ENCODE measurements at regions of chr6 and their contacts with region 1.

Region 1: DNA sequence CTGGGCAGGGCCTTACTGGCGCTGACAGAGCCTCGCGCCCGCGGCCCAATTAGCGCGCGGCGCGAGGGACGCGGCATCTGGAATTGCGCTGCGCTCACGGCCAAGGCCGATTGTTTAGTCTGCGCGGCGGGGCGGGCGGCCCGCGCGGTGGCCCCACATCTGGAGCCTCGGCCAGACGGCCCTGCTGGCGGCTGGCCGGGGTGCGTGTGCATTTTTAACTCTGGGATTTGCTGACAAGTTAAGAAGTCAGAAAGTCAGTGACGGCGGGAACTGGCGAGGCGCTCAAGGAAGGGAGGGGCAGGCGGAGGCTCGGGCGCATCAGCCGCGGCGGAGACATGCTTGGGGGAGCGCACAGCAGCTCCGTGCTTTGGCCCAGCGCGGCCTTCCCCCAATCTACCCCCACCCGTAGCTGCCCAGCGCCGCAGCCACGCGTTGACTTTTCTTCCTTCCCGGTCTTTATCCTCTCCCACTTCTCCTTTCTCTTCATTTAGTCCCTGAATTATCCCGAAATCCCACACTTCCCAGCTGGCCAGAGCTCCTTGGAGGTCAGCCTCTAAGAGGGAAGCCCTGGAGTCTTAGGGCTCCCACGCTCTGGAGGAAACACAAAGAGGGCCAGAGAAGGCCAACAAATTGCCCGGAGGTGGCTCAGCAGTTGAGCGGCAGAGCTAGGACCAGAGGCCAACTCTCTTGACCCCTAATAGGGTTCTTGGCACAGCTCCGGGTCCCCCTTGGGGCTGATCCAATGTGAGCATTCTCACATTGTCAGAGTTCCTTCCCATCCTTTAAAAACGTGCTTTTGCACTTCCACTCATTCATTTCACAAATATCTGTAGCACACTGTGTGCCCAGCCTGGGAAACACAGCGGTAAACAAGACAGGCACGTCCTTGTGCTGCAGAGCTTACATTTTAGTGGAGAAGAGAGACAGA is 40.8 kb upstream of the FOXP4 start:
- DNase-seq: peak; percentile 85
- ATAC-seq: peak; percentile 92
- H3K4me3 ChIP-seq: peak overlapping the region in 4 of 5 experiments; percentile 32 to 77 (median 57)
- H3K4me3 Mint-ChIP-seq: peak overlapping the region; percentile 92
- H3K27ac ChIP-seq: peak overlapping the region; percentile 55 to 69
- H3K27ac Mint-ChIP-seq: peak overlapping the region; percentile 91
- H3K4me1 ChIP-seq: peaks cover 29 to 34% of the 10 kb centered on the region in 2 donors
- H3K4me1 Mint-ChIP-seq: peaks cover 37% of the 10 kb centered on the region
- H3K27me3 ChIP-seq: peaks cover 0 to 15% (median 3%) of the 10 kb centered on the region in 4 experiments
- H3K27me3 Mint-ChIP-seq: peaks cover 14% of the 10 kb centered on the region
- CTCF ChIP-seq: no peak

Region 2: GRCh38 chr6:41531591-41532582 is 26.5 kb after region 1 on chr6:
- CTCF ChIA-PET with region 1: interaction called, 9 read pairs
- POLR2A ChIA-PET with region 1: interaction called, 4 read pairs
- intact Hi-C with region 1: loop called (anchors 1 kb)
- DNase-seq: peak; percentile 86
- ATAC-seq: peak; percentile 82
- H3K4me3 ChIP-seq: peak overlapping the region in 4 of 5 experiments; percentile 29 to 48 (median 40)
- H3K4me3 Mint-ChIP-seq: peak overlapping the region; percentile 81
- H3K27ac ChIP-seq: peak overlapping the region; percentile 80 to 87
- H3K27ac Mint-ChIP-seq: peak overlapping the region; percentile 94
- H3K4me1 ChIP-seq: peaks cover 40 to 56% of the 10 kb centered on the region in 2 donors
- H3K4me1 Mint-ChIP-seq: peaks cover 68% of the 10 kb centered on the region
- H3K27me3 ChIP-seq: peaks cover 0 to 2% (median 0%) of the 10 kb centered on the region in 4 experiments
- H3K27me3 Mint-ChIP-seq: peaks cover 6% of the 10 kb centered on the region
- CTCF ChIP-seq: no peak

Region 3: GRCh38 chr6:41560431-41561192 is 55.2 kb after region 1 on chr6:
- CTCF ChIA-PET with region 1: no interaction called
- POLR2A ChIA-PET with region 1: no interaction called
- intact Hi-C with region 1: loop called (anchors 5 kb)
- DNase-seq: peak; percentile 91
- ATAC-seq: peak; percentile 86
- H3K4me3 ChIP-seq: peak overlapping the region; percentile 53 to 86 (median 75)
- H3K4me3 Mint-ChIP-seq: peak overlapping the region; percentile 91
- H3K27ac ChIP-seq: peak overlapping the region; percentile 58 to 92
- H3K27ac Mint-ChIP-seq: peak overlapping the region; percentile 84
- H3K4me1 ChIP-seq: peaks cover 16 to 24% of the 10 kb centered on the region in 2 donors
- H3K4me1 Mint-ChIP-seq: peaks cover 39% of the 10 kb centered on the region
- H3K27me3 ChIP-seq: no peaks in the 10 kb centered on the region
- H3K27me3 Mint-ChIP-seq: no peaks in the 10 kb centered on the region
- CTCF ChIP-seq: no peak

Region 4: DNA sequence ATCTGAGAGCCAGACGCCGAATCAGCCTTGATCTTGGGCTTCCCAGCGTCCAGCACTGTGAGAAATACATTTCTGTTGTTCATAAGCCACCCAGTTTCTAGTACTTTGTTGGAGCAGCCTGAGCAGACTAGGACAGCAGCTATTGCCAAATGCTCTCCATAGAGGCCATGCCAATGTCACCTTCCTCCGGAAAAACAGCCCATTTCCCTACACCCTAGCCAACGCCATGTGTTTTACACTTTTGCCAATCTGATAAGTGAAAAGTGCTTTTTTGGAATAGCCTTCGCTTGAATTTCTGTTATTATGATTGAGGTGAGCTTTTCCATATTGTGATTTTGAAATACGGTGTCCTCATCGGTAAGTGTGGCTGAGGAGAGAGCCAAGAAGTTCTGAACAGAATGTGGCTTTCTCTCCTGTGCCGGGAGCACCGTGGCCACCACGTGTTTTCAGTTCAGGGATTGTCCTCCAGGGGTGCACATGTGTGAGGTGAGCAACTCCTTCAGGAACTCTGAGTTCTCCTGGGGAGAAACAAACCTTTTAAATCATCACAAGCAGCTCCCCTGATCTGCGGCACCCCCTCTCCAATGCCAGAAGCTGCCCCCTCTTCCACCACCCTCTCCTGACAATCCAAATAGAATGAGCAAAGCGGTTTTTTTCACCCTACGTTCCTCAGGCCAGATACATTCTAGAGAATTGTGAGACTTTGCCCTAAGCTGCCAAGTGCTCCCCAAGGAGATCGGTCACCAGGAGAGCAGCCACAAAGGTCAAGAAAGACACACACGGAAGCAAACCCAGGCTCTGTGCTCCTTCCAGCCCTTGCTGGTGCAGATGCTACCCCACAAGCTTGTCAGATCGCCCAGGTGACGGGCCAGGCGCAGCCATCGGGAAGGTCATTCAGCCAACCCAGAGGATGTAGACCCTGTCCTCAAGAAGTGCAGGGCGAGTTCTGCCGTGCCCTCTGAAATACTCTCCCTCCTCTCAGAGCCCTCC is 581.0 kb after region 1 on chr6:
- CTCF ChIA-PET with region 1: no interaction called
- POLR2A ChIA-PET with region 1: no interaction called
- intact Hi-C with region 1: no loop called
- DNase-seq: no peak
- ATAC-seq: no peak
- H3K4me3 ChIP-seq: no peak overlapping the region
- H3K4me3 Mint-ChIP-seq: no peak overlapping the region
- H3K27ac ChIP-seq: no peak overlapping the region
- H3K27ac Mint-ChIP-seq: no peak overlapping the region
- H3K4me1 ChIP-seq: no peaks in the 10 kb centered on the region
- H3K4me1 Mint-ChIP-seq: peaks cover 5% of the 10 kb centered on the region
- H3K27me3 ChIP-seq: no peaks in the 10 kb centered on the region
- H3K27me3 Mint-ChIP-seq: no peaks in the 10 kb centered on the region
- CTCF ChIP-seq: no peak